ENCODE measurements at regions of chr2 and their contacts with region 1.

Region 1: DNA sequence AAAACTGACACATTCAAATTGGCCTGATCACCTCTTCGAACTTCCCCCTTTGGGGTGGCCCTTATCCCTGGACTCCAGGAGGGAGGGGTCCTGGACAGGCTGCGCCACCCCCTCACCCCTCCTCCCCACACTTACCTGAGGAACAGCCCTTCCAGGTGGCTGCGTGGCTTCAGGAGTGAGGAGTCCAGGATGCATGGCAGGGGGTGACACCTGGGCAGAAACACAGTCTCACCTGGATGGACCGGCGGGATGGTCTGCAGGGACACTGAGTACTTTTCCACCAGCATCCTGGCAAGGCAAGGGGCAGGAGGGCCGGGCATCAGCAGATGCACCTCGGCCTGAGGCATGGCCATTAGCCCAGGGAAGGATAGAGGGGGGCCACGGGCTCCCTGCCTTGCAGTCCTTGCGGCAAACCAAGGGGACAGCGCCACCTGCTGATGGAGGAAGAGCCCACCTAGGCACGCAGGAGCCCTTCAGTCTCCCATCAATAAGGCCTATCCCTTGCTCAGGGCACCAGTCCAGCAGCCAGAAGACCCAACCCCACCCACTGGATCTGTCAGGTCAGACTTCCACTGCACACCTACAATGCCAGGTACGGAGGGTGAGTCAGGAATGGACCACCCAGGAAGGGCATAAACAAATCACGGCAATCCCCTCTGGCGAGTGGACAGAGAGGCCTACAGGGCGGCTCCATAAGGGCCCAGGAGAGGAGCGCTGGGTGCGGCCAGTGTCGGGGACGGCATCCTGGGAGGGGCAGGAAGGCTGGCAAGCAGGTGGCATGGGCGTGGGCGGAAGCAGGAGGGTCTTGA is 26.0 kb downstream of the FAM178B start:
- DNase-seq: peak; percentile 79
- ATAC-seq: peak; percentile 100
- H3K4me3 ChIP-seq: no peak overlapping the region
- H3K27ac ChIP-seq: no peak overlapping the region
- H3K4me1 ChIP-seq: no peaks in the 10 kb centered on the region
- H3K27me3 ChIP-seq: peaks cover 6% of the 10 kb centered on the region; the same call in 1 of the 2 replicates
- CTCF ChIP-seq: peak; percentile 95
- POLR2A ChIP-seq: 0 out of 2 replicates have a peak, but pooled peaks have one; percentile 34
- RAD21 ChIP-seq: peak; percentile 97

Region 2: GRCh38 chr2:96407041-96407918 is 553.1 kb before region 1 on chr2:
- CTCF ChIA-PET with region 1: no interaction called
- POLR2A ChIA-PET with region 1: no interaction called
- dilution Hi-C with region 1: no loop called
- in situ Hi-C with region 1: no loop called
- intact Hi-C with region 1: loop called (anchors 5 kb)
- DNase-seq: peak; percentile 79
- ATAC-seq: peak; percentile 97
- H3K4me3 ChIP-seq: no peak overlapping the region
- H3K27ac ChIP-seq: no peak overlapping the region
- H3K4me1 ChIP-seq: peaks cover 2% of the 10 kb centered on the region; the same call in 1 of the 2 replicates
- H3K27me3 ChIP-seq: peaks cover 37% of the 10 kb centered on the region
- CTCF ChIP-seq: peak; percentile 81
- POLR2A ChIP-seq: no peak
- RAD21 ChIP-seq: peak; percentile 74

Region 3: DNA sequence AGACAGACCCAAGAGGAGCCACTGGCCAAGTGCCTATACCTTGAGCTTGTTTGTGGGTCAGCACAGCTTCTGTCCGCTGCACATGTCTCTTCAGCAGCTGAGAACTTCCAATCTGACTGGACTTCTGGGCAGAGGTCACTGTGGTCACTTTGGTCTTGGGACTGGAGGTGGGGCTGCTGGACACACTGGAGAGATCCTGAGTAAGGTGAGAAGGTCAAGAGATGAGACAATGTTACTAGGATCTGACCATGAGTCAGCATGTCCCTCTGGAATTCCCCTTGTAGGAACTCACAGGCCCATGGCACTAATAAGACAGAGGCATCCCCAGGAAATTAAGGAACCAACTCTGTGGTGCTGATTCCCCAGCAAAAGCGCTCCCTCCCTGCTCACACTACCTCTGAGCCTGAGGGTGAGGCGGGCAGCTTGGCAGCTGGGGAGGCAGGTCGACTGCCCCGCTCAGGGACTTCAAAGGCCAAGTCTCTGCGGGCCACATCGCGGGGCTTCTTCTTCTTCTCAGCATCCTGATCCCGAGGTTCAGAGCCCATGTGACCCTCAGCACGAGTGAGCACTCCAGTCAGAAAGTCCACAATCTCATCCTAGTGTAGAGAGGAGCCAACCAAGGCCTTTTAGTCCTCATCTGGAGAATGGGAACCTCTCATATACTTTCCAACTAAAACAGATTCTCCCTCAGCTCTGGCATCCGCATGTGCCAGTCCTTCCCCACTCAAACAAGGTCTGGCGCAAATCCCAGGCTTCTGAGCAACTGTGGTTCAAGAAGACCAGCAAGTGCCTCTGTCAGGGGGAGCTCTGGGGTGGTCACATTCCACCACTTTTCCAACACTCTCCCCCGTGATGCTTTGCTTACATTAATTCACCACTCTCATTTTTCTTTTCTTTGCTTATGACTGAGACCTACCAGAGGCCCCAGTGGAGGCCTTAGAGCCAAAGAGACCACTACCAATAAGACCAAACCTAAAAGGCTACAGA is 351.6 kb before region 1 on chr2:
- CTCF ChIA-PET with region 1: no interaction called
- POLR2A ChIA-PET with region 1: no interaction called
- dilution Hi-C with region 1: no loop called
- in situ Hi-C with region 1: loop called (anchors 25 kb)
- intact Hi-C with region 1: no loop called
- DNase-seq: peak; percentile 80
- ATAC-seq: peak; percentile 69
- H3K4me3 ChIP-seq: no peak overlapping the region
- H3K27ac ChIP-seq: no peak overlapping the region
- H3K4me1 ChIP-seq: peaks cover 11% of the 10 kb centered on the region
- H3K27me3 ChIP-seq: no peaks in the 10 kb centered on the region
- CTCF ChIP-seq: no peak
- POLR2A ChIP-seq: no peak
- RAD21 ChIP-seq: no peak

Region 4: DNA sequence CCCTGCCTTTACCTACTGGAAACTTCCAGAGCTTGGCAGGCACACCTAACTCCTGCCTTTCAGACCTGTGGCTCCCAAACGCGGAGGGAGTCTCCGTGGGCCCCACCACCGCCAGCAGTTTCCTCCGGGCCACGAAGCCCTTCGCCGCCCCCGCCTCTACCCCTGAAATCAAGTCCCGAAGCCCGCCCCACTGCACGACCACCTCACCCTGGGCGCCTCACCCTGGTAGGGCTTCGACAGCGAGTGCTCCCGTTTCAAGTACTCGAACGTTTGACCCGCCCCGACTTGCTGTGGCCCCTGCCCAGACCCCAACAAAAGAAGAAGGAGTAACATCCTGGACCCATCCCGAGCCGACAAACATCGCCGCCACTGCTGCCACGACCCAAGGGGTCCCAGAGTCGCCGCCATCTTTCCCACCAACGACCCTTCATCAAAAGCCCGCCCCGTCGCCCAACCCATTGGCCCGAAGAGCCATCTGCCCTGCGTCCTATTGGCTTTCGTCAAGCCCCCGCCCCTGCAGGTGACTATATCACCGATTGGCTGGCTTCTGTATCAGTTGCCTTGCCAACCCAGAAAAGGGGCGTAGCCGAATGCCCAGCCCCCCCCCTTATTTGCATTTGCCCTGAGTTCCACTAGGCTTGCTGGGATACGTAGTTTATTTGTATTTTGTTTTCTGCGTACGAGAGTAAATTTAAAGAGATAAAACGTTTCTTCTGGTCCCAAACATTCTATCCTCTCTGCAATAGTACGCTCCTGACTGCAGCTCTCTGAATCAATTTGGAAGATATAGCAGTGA is 220.5 kb before region 1 on chr2 and contains the start of gene LMAN2L:
- CTCF ChIA-PET with region 1: no interaction called
- POLR2A ChIA-PET with region 1: no interaction called
- dilution Hi-C with region 1: no loop called
- in situ Hi-C with region 1: no loop called
- intact Hi-C with region 1: loop called (anchors 10 kb)
- DNase-seq: peak; percentile 95
- ATAC-seq: peak; percentile 100
- H3K4me3 ChIP-seq: peak within 1 kb of the TSS; percentile 81
- H3K27ac ChIP-seq: peak within 1 kb of the TSS; percentile 75
- H3K4me1 ChIP-seq: peaks cover 2% of the 10 kb centered on the region
- H3K27me3 ChIP-seq: no peaks in the 10 kb centered on the region; the same call in 1 of the 2 replicates
- CTCF ChIP-seq: no peak
- POLR2A ChIP-seq: peak; percentile 70; the same call in 1 of the 2 replicates
- RAD21 ChIP-seq: no peak
- total RNA-seq, gene LMAN2L: 19.2 and 22.9 TPM in 2 replicates

Region 5: DNA sequence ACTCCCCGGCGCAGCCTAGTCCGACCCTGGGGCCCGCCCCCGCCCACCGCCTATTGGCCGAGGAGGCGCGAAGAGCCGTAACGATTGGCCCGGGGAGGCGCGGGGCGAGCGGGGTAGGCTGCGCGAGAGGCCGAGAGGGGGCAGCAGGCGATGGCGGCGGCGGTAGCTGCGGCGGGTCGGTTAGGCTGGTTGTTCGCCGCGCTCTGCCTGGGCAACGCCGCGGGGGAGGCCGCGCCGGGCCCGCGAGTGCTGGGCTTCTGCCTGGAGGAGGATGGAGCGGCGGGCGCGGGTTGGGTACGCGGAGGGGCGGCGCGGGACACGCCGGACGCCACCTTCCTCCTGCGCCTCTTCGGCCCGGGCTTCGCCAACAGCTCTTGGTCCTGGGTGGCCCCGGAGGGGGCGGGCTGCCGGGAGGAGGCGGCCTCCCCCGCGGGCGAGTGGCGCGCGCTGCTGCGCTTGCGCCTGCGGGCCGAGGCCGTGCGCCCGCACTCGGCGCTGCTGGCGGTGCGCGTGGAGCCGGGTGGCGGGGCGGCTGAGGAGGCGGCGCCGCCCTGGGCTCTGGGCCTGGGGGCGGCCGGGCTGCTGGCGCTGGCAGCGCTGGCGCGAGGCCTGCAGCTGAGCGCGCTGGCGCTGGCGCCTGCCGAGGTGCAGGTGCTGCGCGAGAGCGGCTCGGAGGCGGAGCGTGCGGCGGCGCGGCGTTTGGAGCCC is 144.1 kb before region 1 on chr2 and contains the start of gene CNNM3:
- CTCF ChIA-PET with region 1: no interaction called
- POLR2A ChIA-PET with region 1: no interaction called
- dilution Hi-C with region 1: no loop called
- in situ Hi-C with region 1: no loop called
- intact Hi-C with region 1: loop called (anchors 1 kb)
- DNase-seq: peak; percentile 88
- ATAC-seq: peak; percentile 96
- H3K4me3 ChIP-seq: peak within 1 kb of the TSS; percentile 69
- H3K27ac ChIP-seq: peak within 1 kb of the TSS; percentile 60
- H3K4me1 ChIP-seq: peaks cover 12% of the 10 kb centered on the region
- H3K27me3 ChIP-seq: no peaks in the 10 kb centered on the region
- CTCF ChIP-seq: peak; percentile 59
- POLR2A ChIP-seq: no peak
- RAD21 ChIP-seq: peak; percentile 31
- total RNA-seq, gene CNNM3: 2.2 and 2.3 TPM in 2 replicates

Region 6: GRCh38 chr2:96826546-96827278 is 133.6 kb before region 1 on chr2:
- CTCF ChIA-PET with region 1: no interaction called
- POLR2A ChIA-PET with region 1: no interaction called
- dilution Hi-C with region 1: no loop called
- in situ Hi-C with region 1: no loop called
- intact Hi-C with region 1: no loop called
- DNase-seq: no peak
- ATAC-seq: no peak
- H3K4me3 ChIP-seq: no peak overlapping the region
- H3K27ac ChIP-seq: no peak overlapping the region
- H3K4me1 ChIP-seq: peaks cover 8% of the 10 kb centered on the region; the same call in 1 of the 2 replicates
- H3K27me3 ChIP-seq: no peaks in the 10 kb centered on the region
- CTCF ChIP-seq: no peak
- POLR2A ChIP-seq: no peak
- RAD21 ChIP-seq: no peak

Region 7: GRCh38 chr2:96856776-96857673 is 103.3 kb before region 1 on chr2:
- CTCF ChIA-PET with region 1: interaction called, 23 read pairs
- POLR2A ChIA-PET with region 1: no interaction called
- dilution Hi-C with region 1: no loop called
- in situ Hi-C with region 1: loop called (anchors 5 kb)
- intact Hi-C with region 1: loop called (anchors 1 kb)
- DNase-seq: no peak
- ATAC-seq: no peak; the same call in 1 of the 2 replicates
- H3K4me3 ChIP-seq: peak overlapping the region; percentile 60
- H3K27ac ChIP-seq: peak overlapping the region; percentile 58; the same call in 1 of the 2 replicates
- H3K4me1 ChIP-seq: peaks cover 12% of the 10 kb centered on the region
- H3K27me3 ChIP-seq: no peaks in the 10 kb centered on the region
- CTCF ChIP-seq: no peak
- POLR2A ChIP-seq: no peak
- RAD21 ChIP-seq: no peak

Region 8: GRCh38 chr2:96868555-96869280 is 91.6 kb before region 1 on chr2:
- CTCF ChIA-PET with region 1: no interaction called
- POLR2A ChIA-PET with region 1: no interaction called
- dilution Hi-C with region 1: no loop called
- in situ Hi-C with region 1: no loop called
- intact Hi-C with region 1: loop called (anchors 1 kb)
- DNase-seq: peak; percentile 91
- ATAC-seq: peak; percentile 78
- H3K4me3 ChIP-seq: peak overlapping the region; percentile 87
- H3K27ac ChIP-seq: peak overlapping the region; percentile 88
- H3K4me1 ChIP-seq: peaks cover 7% of the 10 kb centered on the region; the same call in 1 of the 2 replicates
- H3K27me3 ChIP-seq: no peaks in the 10 kb centered on the region
- CTCF ChIP-seq: peak; percentile 59
- POLR2A ChIP-seq: peak; percentile 70; the same call in 1 of the 2 replicates
- RAD21 ChIP-seq: peak; percentile 26

Region 9: DNA sequence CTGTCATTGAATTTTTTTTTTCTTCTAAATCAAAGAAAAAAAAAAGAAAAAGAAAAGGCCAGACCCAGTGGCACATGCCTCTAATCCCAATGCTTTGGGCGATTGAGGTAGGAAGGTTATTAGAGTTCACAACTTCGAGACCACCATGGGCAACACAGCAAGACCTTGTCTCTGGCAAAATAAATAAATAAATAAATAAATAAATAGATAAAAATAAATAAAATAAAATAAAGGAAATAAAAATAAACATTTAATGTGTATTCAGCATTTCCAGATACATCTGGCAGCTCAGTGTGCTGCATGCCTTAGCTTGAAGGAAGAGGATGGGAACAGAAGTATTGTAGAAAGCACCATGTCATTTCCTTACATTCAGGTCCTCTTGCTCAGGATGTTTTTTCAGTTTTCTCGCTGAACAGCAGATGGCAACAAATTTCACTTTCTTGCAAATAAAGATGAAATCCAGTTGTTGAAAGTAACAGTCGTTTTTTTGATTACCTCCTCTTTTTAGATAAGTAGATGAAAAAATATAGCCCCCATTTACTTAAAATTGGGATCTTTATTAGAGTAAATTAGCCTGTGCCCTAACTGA is 51.7 kb after region 1 on chr2:
- CTCF ChIA-PET with region 1: no interaction called
- POLR2A ChIA-PET with region 1: no interaction called
- dilution Hi-C with region 1: no loop called
- in situ Hi-C with region 1: no loop called
- intact Hi-C with region 1: no loop called
- DNase-seq: peak; percentile 70
- ATAC-seq: no peak
- H3K4me3 ChIP-seq: no peak overlapping the region
- H3K27ac ChIP-seq: no peak overlapping the region
- H3K4me1 ChIP-seq: no peaks in the 10 kb centered on the region
- H3K27me3 ChIP-seq: peaks cover 14% of the 10 kb centered on the region
- CTCF ChIP-seq: peak; percentile 49
- POLR2A ChIP-seq: no peak
- RAD21 ChIP-seq: peak; percentile 30; the same call in 1 of the 2 replicates